HCT116 (cell line): ENCODE measurements at regions of chr3 and their contacts with region 1.

Region 1: GRCh38 chr3:99023590-99024192 is 122.2 kb upstream of the DCBLD2 start:
- DNase-seq: peak; percentile 22
- ATAC-seq: peak; percentile 53; the same call in 1 of the 2 replicates
- H3K4me3 ChIP-seq: no peak overlapping the region
- H3K27ac ChIP-seq: no peak overlapping the region
- H3K4me1 ChIP-seq: no peaks in the 10 kb centered on the region
- H3K27me3 ChIP-seq: no peaks in the 10 kb centered on the region
- CTCF ChIP-seq: peak; percentile 47 to 76 (median 49); a peak in 5 of 6 replicates
- POLR2A ChIP-seq: no peak
- RAD21 ChIP-seq: peak; percentile 68

Region 2: DNA sequence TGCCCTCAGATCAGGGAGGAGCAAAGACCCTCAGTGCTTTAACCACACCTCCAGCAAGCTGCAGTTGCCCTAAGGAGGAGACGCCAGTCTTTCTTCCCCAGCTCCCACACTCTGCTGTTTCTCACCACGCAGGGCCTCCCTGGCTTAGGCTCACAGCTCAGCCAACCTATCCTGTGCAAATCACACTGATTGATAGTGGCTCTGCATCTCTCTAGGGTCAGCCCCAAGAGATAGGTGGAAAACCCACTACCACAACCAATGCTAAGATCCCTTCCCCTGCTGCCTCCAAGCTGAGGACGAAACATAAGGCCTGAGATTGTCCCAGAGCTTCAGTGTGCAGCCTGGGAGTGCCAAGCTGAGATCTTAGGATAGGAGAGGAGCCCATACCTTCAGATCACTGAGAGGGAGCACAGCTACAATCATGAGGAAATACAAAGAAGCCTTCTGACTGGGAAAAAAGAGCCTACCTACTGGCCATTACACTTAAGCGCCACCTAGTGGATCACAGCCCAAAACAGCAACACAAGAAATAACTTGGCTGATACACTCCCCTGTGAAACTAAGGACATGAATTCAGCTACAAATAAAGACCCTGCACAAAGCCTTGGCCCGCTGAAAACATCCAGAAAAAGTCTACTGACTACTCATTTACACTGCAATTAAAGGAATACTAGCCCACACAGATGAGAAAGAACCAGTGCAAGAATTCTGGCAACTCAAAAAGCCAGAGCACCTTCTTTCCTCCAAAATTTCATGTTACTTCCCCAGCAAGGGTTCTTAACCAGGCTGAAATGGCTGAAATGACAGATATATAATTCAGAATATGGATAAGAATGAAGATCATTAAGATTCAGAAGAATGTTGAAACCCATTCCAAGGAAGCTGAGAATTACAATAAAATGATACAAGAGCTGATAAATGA is 149.3 kb after region 1 on chr3:
- CTCF ChIA-PET with region 1: interaction called, 24 read pairs
- POLR2A ChIA-PET with region 1: no interaction called
- RAD21 ChIA-PET with region 1: interaction called, 5 read pairs
- intact Hi-C with region 1: loop called (anchors 1 kb)
- DNase-seq: peak; percentile 56
- ATAC-seq: peak; percentile 93
- H3K4me3 ChIP-seq: no peak overlapping the region
- H3K27ac ChIP-seq: no peak overlapping the region
- H3K4me1 ChIP-seq: no peaks in the 10 kb centered on the region
- H3K27me3 ChIP-seq: no peaks in the 10 kb centered on the region
- CTCF ChIP-seq: peak; percentile 72 to 91 (median 88); a peak in 5 of 6 replicates
- POLR2A ChIP-seq: no peak
- RAD21 ChIP-seq: peak; percentile 82

Region 3: GRCh38 chr3:99532246-99532645 is 508.6 kb after region 1 on chr3:
- CTCF ChIA-PET with region 1: no interaction called
- POLR2A ChIA-PET with region 1: no interaction called
- RAD21 ChIA-PET with region 1: no interaction called
- intact Hi-C with region 1: loop called (anchors 10 kb)
- DNase-seq: peak; percentile 31
- ATAC-seq: peak; percentile 99
- H3K4me3 ChIP-seq: no peak overlapping the region
- H3K27ac ChIP-seq: no peak overlapping the region
- H3K4me1 ChIP-seq: no peaks in the 10 kb centered on the region
- H3K27me3 ChIP-seq: peaks cover 58% of the 10 kb centered on the region
- CTCF ChIP-seq: peak; percentile 42 to 82 (median 76); a peak in 5 of 6 replicates
- POLR2A ChIP-seq: no peak
- RAD21 ChIP-seq: peak; percentile 61

Region 4: DNA sequence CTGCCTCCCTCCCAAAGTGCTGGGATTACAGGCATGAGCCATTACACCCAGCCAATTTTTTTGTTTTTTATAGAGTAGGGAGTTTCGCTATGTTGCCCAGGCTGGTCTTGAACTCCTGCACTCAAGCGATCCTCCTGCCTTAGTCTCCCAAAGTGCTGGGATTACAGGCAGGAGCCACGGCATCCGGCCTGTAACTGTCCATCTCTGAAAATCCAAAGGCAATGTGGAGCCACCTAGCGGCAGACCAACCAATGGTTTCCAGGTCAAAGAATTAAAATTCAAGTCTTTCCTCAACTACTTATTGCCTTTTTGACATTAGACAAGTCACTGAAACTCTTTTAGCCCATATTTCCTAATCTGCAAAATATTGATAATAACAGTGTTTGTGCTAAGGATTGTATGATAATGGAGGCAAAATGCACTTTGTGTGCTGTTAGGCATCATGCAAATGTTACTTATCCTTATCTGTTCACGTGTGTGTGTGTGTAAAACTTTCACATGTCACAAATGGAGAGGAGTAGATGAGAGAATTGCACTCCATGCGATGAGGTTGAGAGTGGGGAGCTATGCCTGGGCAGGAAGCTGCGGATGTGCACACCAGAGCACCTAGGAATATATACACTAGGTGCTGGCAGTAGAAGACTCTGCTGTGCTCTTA is 663.4 kb after region 1 on chr3:
- CTCF ChIA-PET with region 1: no interaction called
- POLR2A ChIA-PET with region 1: no interaction called
- RAD21 ChIA-PET with region 1: no interaction called
- intact Hi-C with region 1: loop called (anchors 2 kb)
- DNase-seq: peak; percentile 51
- ATAC-seq: peak; percentile 95
- H3K4me3 ChIP-seq: no peak overlapping the region
- H3K27ac ChIP-seq: no peak overlapping the region
- H3K4me1 ChIP-seq: no peaks in the 10 kb centered on the region
- H3K27me3 ChIP-seq: peaks cover 49% of the 10 kb centered on the region
- CTCF ChIP-seq: peak; percentile 40 to 71 (median 70); a peak in 5 of 6 replicates
- POLR2A ChIP-seq: no peak
- RAD21 ChIP-seq: peak; percentile 67

Region 5: DNA sequence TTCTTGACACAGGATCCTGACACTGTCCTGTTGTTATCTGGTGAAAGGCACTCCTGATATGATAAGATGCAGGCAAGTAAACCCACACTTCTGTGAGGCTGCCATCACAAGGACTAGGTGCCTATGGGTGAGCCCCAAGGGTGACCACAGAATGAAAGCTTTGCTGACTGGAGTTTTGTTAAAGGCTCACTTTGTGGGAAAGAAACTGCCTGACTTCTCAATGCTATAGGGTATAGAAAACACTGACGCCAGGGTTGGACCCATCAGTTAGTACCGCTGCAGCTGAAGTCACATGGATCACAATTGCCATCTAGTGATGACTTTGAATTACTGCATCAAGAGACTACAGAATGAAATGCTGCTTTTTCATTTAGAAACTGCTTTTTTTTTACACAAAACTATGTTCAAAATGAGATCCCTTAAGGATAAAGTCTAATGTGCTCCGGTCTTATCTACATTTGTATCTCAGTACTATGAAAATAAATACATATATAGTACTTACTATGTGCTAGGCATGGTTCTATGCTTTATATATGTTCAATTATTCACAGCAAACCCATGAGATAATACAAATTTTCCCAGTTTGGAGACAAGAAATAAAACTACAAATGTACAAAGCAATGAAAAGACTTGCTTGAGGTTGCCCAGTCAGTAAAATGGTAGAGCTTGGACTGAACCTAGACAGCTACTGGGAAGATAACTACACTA is 729.7 kb after region 1 on chr3:
- CTCF ChIA-PET with region 1: interaction called, 8 read pairs
- POLR2A ChIA-PET with region 1: no interaction called
- RAD21 ChIA-PET with region 1: interaction called in 1 of 2 experiments, 3 read pairs
- intact Hi-C with region 1: loop called (anchors 1 kb)
- DNase-seq: peak; percentile 28
- ATAC-seq: peak; percentile 92
- H3K4me3 ChIP-seq: no peak overlapping the region
- H3K27ac ChIP-seq: no peak overlapping the region
- H3K4me1 ChIP-seq: no peaks in the 10 kb centered on the region
- H3K27me3 ChIP-seq: peaks cover 66% of the 10 kb centered on the region
- CTCF ChIP-seq: peak; percentile 37 to 76 (median 68); a peak in 5 of 6 replicates
- POLR2A ChIP-seq: no peak
- RAD21 ChIP-seq: peak; percentile 76